Calu3 (cell line): ENCODE measurements at regions of chr11 and their contacts with region 1.

Region 1: GRCh38 chr11:134050541-134051383 is 18.1 kb upstream of the JAM3 start:
- DNase-seq: peak; percentile 64
- H3K4me3 Mint-ChIP-seq: no peak overlapping the region
- H3K27ac Mint-ChIP-seq: no peak overlapping the region
- H3K4me1 Mint-ChIP-seq: no peaks in the 10 kb centered on the region
- H3K27me3 Mint-ChIP-seq: peaks cover 39% of the 10 kb centered on the region
- CTCF ChIP-seq: peak; percentile 73

Region 2: DNA sequence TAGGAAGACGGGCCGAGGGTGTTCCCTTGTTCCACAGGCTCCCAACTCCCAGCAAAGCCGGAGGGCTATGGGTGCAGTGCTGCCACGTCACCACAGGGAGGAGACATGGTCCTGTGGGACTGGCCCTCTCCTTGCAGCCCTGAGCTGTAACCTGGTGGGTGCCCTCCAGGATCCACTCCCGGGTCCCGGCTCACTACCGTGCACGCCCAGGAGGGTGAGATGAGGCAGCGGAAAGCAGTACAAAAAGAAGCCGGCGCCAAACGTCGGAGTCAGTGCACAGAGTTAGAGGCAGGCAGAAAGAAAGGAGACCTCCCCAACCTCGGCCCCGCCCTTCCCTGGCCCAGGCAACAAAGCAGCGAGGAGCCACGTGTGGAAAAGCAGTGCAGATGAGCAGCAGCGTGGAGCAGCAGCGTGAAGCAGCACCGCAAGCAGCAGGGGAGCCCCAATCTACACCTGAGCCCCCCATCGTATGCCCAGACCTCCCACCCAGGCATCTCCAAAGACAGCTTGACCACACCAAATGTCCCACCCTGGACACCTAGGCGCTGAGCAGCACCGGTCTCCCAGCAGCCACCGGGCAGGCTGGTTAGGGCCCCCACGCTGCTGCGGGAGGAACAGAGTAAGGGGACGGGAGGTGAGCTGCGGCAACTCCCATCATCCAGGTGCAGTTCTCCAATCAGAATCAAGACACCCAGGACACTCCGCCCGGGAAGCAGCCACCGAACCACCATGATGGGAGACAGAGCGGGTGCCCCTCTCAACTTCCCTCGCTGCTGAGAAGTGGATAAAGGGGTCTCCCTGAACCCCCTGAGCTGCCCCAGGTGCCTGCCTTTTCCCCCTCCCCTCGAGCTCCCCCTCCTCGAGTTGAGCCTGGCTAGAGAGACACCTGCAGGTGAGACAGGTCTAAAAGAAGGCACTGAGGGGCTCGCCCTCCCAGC is 122.8 kb before region 1 on chr11:
- CTCF ChIA-PET with region 1: interaction called, 17 read pairs
- intact Hi-C with region 1: loop called (anchors 5 kb)
- DNase-seq: peak; percentile 84
- H3K4me3 Mint-ChIP-seq: peak overlapping the region; percentile 31
- H3K27ac Mint-ChIP-seq: no peak overlapping the region
- H3K4me1 Mint-ChIP-seq: peaks cover 9% of the 10 kb centered on the region
- H3K27me3 Mint-ChIP-seq: no peaks in the 10 kb centered on the region
- CTCF ChIP-seq: peak; percentile 78

Region 3: GRCh38 chr11:134098566-134099184 is 47.9 kb after region 1 on chr11:
- CTCF ChIA-PET with region 1: interaction called, 19 read pairs
- intact Hi-C with region 1: loop called (anchors 1 kb)
- DNase-seq: no peak
- H3K4me3 Mint-ChIP-seq: no peak overlapping the region
- H3K27ac Mint-ChIP-seq: no peak overlapping the region
- H3K4me1 Mint-ChIP-seq: no peaks in the 10 kb centered on the region
- H3K27me3 Mint-ChIP-seq: peaks cover 14% of the 10 kb centered on the region
- CTCF ChIP-seq: peak; percentile 31

Region 4: GRCh38 chr11:134139873-134140331 is 89.1 kb after region 1 on chr11:
- CTCF ChIA-PET with region 1: no interaction called
- intact Hi-C with region 1: loop called (anchors 1 kb)
- DNase-seq: peak; percentile 41
- H3K4me3 Mint-ChIP-seq: no peak overlapping the region
- H3K27ac Mint-ChIP-seq: no peak overlapping the region
- H3K4me1 Mint-ChIP-seq: no peaks in the 10 kb centered on the region
- H3K27me3 Mint-ChIP-seq: no peaks in the 10 kb centered on the region
- CTCF ChIP-seq: peak; percentile 52